Activated B cell treated with CpG ODN at 0.5 μM for 24 hours (primary cell): ENCODE measurements at regions of chr7 and their contacts with region 1.

Region 1: GRCh38 chr7:158704704-158705468 is at the start of gene NCAPG2:
- DNase-seq: peak; percentile 97
- ATAC-seq: peak; percentile 98
- H3K4me3 Mint-ChIP-seq: peak within 1 kb of the TSS; percentile 90
- H3K27ac Mint-ChIP-seq: peak within 1 kb of the TSS; percentile 69
- H3K4me1 Mint-ChIP-seq: peaks cover 13% of the 10 kb centered on the region
- H3K27me3 Mint-ChIP-seq: no peaks in the 10 kb centered on the region
- CTCF ChIP-seq: no peak
- total RNA-seq, gene NCAPG2: 8.2 and 11.0 TPM in 2 replicates

Region 2: GRCh38 chr7:158613481-158613880 is 91.4 kb before region 1 on chr7:
- CTCF ChIA-PET with region 1: no interaction called
- POLR2A ChIA-PET with region 1: no interaction called
- intact Hi-C with region 1: loop called (anchors 5 kb)
- DNase-seq: no peak
- ATAC-seq: peak; percentile 89
- H3K4me3 Mint-ChIP-seq: peak overlapping the region; percentile 62
- H3K27ac Mint-ChIP-seq: no peak overlapping the region
- H3K4me1 Mint-ChIP-seq: peaks cover 26% of the 10 kb centered on the region
- H3K27me3 Mint-ChIP-seq: no peaks in the 10 kb centered on the region
- CTCF ChIP-seq: no peak

Region 3: DNA sequence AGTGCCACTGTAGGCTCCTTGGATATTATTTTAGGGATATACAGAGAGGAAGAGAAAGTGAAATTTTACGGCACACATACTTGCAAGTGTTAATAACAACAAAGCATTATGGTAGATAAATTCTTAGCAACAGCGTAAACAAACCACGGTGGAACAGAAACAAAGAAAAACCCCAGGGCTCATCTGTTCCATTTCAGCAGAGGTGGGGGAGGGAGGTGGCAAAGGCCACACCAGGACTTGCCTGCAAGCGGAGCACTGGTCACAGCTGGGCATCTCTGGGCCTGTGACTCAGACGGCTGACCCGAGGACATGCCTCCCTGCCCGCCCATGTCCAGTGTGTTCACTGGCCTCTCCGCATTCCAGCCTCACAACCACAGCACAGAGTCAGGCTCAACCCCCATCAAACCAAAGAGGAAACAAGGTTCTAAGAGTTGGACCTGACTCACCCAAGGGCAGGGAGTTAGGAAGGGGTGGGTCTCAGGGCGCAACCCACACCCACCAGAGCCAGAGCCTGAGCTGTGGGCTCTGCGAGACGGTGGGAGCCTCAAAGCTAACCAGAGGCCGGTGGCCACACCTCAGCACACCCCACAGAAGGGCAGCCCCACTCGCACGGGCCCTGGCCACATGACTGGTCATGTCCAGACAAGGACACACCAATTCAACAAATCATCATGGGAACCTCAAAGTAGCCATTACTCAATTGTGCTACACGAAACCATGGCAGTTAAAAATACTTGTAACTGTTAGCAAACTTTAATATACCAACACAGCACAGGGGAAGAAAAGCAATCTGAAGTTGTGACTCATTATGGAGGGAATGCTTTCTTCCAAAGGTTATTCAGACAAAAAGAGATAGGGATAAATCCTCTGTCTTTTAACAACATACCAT is 113.7 kb after region 1 on chr7:
- CTCF ChIA-PET with region 1: no interaction called
- POLR2A ChIA-PET with region 1: no interaction called
- intact Hi-C with region 1: loop called (anchors 1 kb)
- DNase-seq: peak; percentile 32
- ATAC-seq: peak; percentile 79
- H3K4me3 Mint-ChIP-seq: peak overlapping the region; percentile 56
- H3K27ac Mint-ChIP-seq: peak overlapping the region; percentile 78
- H3K4me1 Mint-ChIP-seq: peaks cover 57% of the 10 kb centered on the region
- H3K27me3 Mint-ChIP-seq: no peaks in the 10 kb centered on the region
- CTCF ChIP-seq: no peak

Region 4: GRCh38 chr7:158856883-158857668 is 152.2 kb after region 1 on chr7:
- CTCF ChIA-PET with region 1: no interaction called
- POLR2A ChIA-PET with region 1: interaction called, 6 read pairs
- intact Hi-C with region 1: loop called (anchors 1 kb)
- DNase-seq: no peak
- ATAC-seq: peak; percentile 9
- H3K4me3 Mint-ChIP-seq: peak overlapping the region; percentile 98
- H3K27ac Mint-ChIP-seq: no peak overlapping the region
- H3K4me1 Mint-ChIP-seq: peaks cover 12% of the 10 kb centered on the region
- H3K27me3 Mint-ChIP-seq: no peaks in the 10 kb centered on the region
- CTCF ChIP-seq: no peak